ENCODE measurements at regions of chr3 and their contacts with region 1.

Region 1: DNA sequence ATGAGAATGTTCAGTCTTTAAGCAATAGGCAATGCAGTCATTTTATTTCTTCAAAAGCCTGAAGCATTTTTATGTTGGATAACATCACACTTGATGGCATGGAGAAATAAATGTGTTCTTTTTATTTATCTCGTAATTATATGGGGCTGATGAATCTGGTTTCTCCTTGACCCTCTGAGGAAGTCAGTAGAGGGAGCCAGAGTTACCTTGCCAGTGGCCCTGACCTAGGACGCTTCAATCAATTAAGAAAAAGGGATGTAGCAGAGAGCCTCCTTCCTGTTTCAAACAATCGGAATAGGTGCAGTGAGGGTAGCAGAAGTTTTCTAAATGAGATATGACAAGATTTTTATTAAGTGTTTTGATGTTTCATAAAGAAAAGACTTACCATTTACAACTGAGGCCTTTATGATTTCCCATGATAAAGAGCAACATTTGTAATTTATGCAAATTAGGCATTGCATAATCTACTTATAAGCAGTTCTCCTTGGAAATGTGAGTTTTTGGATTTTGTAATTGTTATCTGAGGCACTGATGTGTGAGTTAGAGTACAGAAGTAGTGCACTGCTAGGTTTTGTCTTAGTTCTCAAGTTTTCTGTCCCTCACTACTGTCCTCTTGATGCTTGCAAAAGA is 129.1 kb downstream of the RAP2B start:
- DNase-seq: no peak
- ATAC-seq: no peak
- H3K4me3 ChIP-seq: no peak overlapping the region
- H3K27ac ChIP-seq: no peak overlapping the region
- H3K4me1 ChIP-seq: no peaks in the 10 kb centered on the region
- H3K27me3 ChIP-seq: no peaks in the 10 kb centered on the region

Region 2: GRCh38 chr3:153173758-153174516 is 117.2 kb before region 1 on chr3:
- intact Hi-C with region 1: no loop called
- DNase-seq: no peak
- ATAC-seq: no peak
- H3K4me3 ChIP-seq: no peak overlapping the region
- H3K27ac ChIP-seq: no peak overlapping the region
- H3K4me1 ChIP-seq: no peaks in the 10 kb centered on the region
- H3K27me3 ChIP-seq: no peaks in the 10 kb centered on the region

Region 3: GRCh38 chr3:153246806-153247205 is 44.4 kb before region 1 on chr3:
- intact Hi-C with region 1: loop called in 1 of 2 experiments (anchors 10 kb)
- DNase-seq: no peak
- ATAC-seq: peak; percentile 63
- H3K4me3 ChIP-seq: no peak overlapping the region
- H3K27ac ChIP-seq: no peak overlapping the region
- H3K4me1 ChIP-seq: no peaks in the 10 kb centered on the region
- H3K27me3 ChIP-seq: no peaks in the 10 kb centered on the region

Region 4: DNA sequence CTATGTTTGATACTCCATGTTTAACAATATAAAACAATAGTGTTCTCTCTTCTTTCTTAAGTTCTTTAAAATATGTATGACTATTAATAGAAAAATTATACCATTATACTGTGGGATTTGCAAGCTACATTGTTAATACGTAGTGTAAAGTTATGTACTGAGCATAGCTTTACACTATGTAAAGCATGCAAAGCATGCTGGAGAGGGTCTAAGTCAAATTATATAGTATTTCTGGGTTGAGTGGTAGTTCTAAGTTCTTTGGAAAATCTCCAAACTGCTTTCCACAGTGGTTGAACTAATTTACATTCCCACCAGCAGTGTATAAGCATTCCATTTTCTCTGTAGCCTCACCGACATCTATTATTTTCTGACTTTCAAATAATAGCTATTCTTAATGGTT is 123.8 kb after region 1 on chr3:
- intact Hi-C with region 1: no loop called
- DNase-seq: no peak
- ATAC-seq: no peak
- H3K4me3 ChIP-seq: no peak overlapping the region
- H3K27ac ChIP-seq: no peak overlapping the region
- H3K4me1 ChIP-seq: no peaks in the 10 kb centered on the region
- H3K27me3 ChIP-seq: no peaks in the 10 kb centered on the region